Dendritic cell treated with granulocyte-macrophage colony-stimulating factor and Interleukin-4, amounts not matched to agents 40 ng/mL and 50 ng/mL, for 4 days (primary cell): ENCODE measurements at regions of chr1 and their contacts with region 1.

Region 1: GRCh38 chr1:157806431-157807149 is 13.3 kb downstream of the FCRL1 start:
- H3K4me3 Mint-ChIP-seq: no peak overlapping the region
- H3K27ac Mint-ChIP-seq: no peak overlapping the region
- H3K4me1 Mint-ChIP-seq: peaks cover 20% of the 10 kb centered on the region
- H3K27me3 Mint-ChIP-seq: peaks cover 26% of the 10 kb centered on the region

Region 2: GRCh38 chr1:157856538-157856937 is 49.9 kb after region 1 on chr1:
- intact Hi-C with region 1: loop called (anchors 5 kb)
- H3K4me3 Mint-ChIP-seq: no peak overlapping the region
- H3K27ac Mint-ChIP-seq: no peak overlapping the region
- H3K4me1 Mint-ChIP-seq: no peaks in the 10 kb centered on the region
- H3K27me3 Mint-ChIP-seq: peaks cover 6% of the 10 kb centered on the region